RWPE1 (cell line): ENCODE measurements at regions of chr17 and their contacts with region 1.

Region 1: DNA sequence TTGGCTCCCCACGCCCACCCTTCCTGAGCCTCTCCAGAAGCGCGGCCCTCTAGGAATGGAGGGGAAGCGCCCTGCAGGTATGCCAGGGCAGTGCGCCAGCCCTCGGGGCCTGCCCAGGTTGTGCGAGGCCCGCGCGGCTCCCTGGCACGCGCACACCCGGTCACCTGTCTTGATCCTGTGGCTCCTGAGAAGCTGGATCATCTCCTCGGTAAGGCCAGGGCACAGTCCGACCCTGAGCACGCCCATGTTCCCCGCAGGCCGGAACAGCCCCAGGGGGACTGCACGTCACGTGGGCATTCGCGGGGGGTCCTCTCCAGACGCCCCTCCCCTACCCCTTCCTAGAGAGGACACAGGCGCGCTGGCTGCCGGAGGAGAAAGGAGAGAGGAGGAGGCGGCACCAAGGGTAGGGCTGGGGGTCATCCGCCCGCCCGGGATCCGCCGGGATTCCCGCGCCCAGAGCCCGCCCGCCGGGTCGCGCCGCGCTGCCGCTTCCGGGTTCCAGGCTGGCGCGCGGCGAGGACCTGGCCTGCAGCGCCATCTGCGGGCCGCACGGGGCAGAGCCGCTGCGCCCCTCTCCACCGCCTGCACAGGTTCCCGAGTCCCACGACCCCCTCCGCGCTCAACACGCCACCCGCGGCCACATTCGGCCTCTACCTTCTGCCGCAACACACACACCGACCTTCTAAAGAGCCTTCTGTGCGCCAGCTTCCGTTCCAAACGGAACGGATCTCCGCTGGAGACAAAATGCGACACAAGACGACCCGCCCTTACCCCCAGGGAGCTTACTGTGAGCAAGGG is at the start of gene RAD51D:
- DNase-seq: peak; percentile 76
- H3K27ac ChIP-seq: peak within 1 kb of the TSS; percentile 71
- CTCF ChIP-seq: peak; percentile 95

Region 2: GRCh38 chr17:34998205-34998604 is 121.4 kb before region 1 on chr17:
- CTCF ChIA-PET with region 1: interaction called, 13 read pairs
- POLR2A ChIA-PET with region 1: no interaction called
- DNase-seq: peak; percentile 75
- H3K27ac ChIP-seq: no peak overlapping the region
- CTCF ChIP-seq: peak; percentile 76

Region 3: DNA sequence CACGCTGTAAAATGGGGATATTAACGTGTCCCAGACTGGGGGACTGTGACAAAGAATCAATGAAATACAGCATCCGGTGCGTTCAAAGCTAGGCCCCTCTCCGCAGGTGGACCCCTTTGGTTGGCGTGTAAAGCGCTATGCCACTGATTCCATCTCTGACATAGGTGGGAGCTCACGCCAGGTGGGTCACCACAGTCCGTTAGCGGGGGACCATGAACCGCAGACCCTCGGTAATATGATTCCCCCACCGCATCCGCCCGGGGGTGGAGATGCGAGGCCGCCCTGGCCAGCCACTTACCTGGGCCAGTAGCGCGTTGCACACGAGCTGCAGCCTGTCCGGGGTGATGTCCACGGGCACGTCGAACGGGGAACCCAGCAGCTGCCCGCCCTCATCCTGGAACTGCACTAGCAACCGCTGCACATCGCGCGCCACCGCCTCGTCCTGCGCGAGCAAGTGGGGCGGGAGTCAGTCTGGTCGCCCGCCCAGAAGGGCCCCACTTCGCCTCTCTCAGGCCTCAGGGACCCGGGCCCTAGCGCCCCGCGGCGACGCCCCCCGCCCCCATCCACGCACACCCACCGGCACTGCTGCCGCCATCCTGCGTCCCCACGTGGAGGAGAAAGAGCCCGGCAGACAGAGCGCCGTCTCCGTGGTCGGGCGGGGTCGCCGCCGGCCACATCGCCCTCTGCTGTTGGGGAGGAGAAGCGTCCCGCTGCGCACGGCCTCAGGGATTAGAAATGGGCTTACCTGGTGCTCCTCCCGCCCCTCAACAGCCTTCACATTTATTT is 22.3 kb after region 1 on chr17 and contains the start of gene NLE1:
- CTCF ChIA-PET with region 1: no interaction called
- POLR2A ChIA-PET with region 1: no interaction called
- DNase-seq: peak; percentile 84
- H3K27ac ChIP-seq: peak within 1 kb of the TSS; percentile 44
- CTCF ChIP-seq: peak; percentile 96